BJ (cell line): ENCODE measurements at regions of chr2 and their contacts with region 1.

Region 1: DNA sequence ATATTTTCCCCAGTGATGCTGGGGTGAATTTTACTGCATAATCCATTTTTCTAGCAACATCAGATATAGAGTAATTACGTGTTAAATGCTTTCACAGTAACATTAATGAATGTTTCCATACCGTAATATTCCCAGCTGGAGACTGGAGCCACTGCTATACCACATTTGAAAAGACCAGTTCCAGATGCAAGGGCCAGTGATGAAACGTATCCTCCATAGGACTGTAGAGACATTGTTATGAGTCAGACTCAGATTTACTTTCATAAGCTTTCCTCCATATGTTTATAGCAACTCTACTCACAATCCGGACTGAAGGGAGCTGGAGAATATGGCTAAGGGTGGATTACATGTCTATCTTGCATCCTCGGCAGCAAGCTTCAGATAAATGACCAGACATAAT is 22.7 kb upstream of the GCG start:
- DNase-seq: no peak
- H3K4me3 ChIP-seq: no peak overlapping the region
- H3K27me3 ChIP-seq: no peaks in the 10 kb centered on the region
- CTCF ChIP-seq: no peak

Region 2: GRCh38 chr2:161703863-161704262 is 470.9 kb before region 1 on chr2:
- CTCF ChIA-PET with region 1: no interaction called
- POLR2A ChIA-PET with region 1: no interaction called
- DNase-seq: no peak
- H3K4me3 ChIP-seq: no peak overlapping the region
- H3K27me3 ChIP-seq: no peaks in the 10 kb centered on the region
- CTCF ChIP-seq: no peak

Region 3: DNA sequence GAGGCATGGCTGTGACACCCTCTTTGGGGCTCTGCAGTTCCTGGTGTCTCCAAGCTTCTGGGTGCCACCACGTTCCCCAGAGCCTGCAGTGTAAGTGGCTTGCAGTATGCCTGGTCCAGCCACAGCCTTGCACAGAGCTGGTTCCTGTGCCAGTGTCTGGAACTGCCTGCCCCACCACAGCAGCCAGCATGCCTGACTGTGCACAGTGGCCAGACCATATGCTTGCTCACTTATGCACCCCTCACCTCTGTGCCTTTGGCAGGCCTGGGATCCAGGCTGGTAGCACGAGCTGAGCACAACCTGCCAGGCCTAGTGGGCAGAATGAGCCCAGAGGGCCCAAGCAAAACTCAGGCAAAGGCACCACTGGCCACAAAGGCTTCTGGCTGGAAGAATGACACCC is 254.9 kb before region 1 on chr2:
- CTCF ChIA-PET with region 1: no interaction called
- POLR2A ChIA-PET with region 1: no interaction called
- DNase-seq: no peak
- H3K4me3 ChIP-seq: no peak overlapping the region
- H3K27me3 ChIP-seq: no peaks in the 10 kb centered on the region; the same call in 1 of the 2 replicates
- CTCF ChIP-seq: no peak

Region 4: GRCh38 chr2:162256591-162256991 is 81.8 kb after region 1 on chr2:
- CTCF ChIA-PET with region 1: interaction called, 3 read pairs
- POLR2A ChIA-PET with region 1: interaction called, 13 read pairs
- DNase-seq: no peak
- H3K4me3 ChIP-seq: no peak overlapping the region
- H3K27me3 ChIP-seq: no peaks in the 10 kb centered on the region
- CTCF ChIP-seq: no peak

Region 5: GRCh38 chr2:162379719-162380580 is 205.2 kb after region 1 on chr2:
- CTCF ChIA-PET with region 1: no interaction called
- POLR2A ChIA-PET with region 1: no interaction called
- DNase-seq: no peak
- H3K4me3 ChIP-seq: no peak overlapping the region
- H3K27me3 ChIP-seq: no peaks in the 10 kb centered on the region
- CTCF ChIP-seq: no peak

Region 6: DNA sequence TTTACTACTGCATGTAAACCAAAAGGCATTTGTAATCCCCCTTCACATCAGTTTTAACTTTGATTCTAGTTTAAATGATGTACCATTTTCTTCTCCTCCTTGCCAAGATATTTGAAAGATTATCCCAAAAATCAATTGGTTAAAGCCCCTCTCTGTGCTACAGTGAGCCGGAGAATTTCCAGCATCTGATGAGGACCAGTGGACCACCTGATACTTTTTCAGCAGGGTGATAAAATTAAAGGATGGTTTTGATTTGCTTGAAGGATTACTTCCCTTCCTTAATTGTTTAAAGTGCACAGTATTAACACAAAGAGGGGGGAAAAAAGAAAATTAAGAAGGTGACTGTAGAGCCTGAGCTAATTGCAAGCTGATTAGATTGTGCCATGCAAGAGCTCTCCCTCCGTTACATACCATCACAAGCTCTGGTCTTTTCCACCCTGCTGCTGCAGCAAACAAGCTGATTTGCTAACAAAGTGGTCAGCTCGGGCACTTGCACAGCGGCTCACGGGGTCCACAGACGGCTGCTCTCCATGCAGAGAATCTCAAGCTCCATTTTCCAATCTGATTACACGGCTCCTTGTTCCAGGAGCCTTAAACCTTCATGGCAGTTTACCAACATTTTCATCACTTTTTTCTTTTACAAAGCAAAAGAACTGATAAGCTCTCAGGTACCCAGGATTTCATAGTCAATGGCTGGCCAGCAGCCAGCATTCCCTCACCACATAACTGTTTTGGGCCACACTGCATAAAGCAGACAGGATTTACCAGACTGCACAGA is 1539.0 kb after region 1 on chr2:
- CTCF ChIA-PET with region 1: no interaction called
- POLR2A ChIA-PET with region 1: no interaction called
- DNase-seq: no peak
- H3K4me3 ChIP-seq: no peak overlapping the region
- H3K27me3 ChIP-seq: no peaks in the 10 kb centered on the region
- CTCF ChIP-seq: no peak